ENCODE measurements at regions of chr22 and their contacts with region 1.

Region 1: GRCh38 chr22:48503035-48503625 is 1324.5 kb downstream of the BRD1 start:
- DNase-seq: no peak
- H3K4me3 ChIP-seq: no peak overlapping the region
- H3K27ac ChIP-seq: no peak overlapping the region
- H3K4me1 ChIP-seq: no peaks in the 10 kb centered on the region
- H3K27me3 ChIP-seq: peaks cover 15% of the 10 kb centered on the region; the same call in 1 of the 2 replicates
- CTCF ChIP-seq: no peak
- EP300 ChIP-seq: no peak
- RAD21 ChIP-seq: no peak

Region 2: GRCh38 chr22:48492366-48493320 is 10.5 kb before region 1 on chr22:
- CTCF ChIA-PET with region 1: interaction called, 10 read pairs
- POLR2A ChIA-PET with region 1: no interaction called
- DNase-seq: peak; percentile 84
- H3K4me3 ChIP-seq: no peak overlapping the region; a peak in 1 of 4 replicates
- H3K27ac ChIP-seq: no peak overlapping the region
- H3K4me1 ChIP-seq: no peaks in the 10 kb centered on the region; a peak in 1 of 4 replicates
- H3K27me3 ChIP-seq: peaks cover 38% of the 10 kb centered on the region; the same call in 1 of the 2 replicates
- CTCF ChIP-seq: peak; percentile 78
- EP300 ChIP-seq: no peak
- RAD21 ChIP-seq: peak; percentile 83